Left colon (tissue), 2 donors: ENCODE measurements at regions of chr17 and their contacts with region 1.

Region 1: GRCh38 chr17:80866147-80866793 is 125.4 kb upstream of the CHMP6 start:
- DNase-seq: peak in 1 of 2 donors; percentile 79
- ATAC-seq: peak; percentile 87

Region 2: GRCh38 chr17:80970044-80970761 is 103.9 kb after region 1 on chr17:
- intact Hi-C with region 1: loop called in 1 of 2 experiments (anchors 10 kb)
- DNase-seq: peak in 1 of 2 donors; percentile 61
- ATAC-seq: peak; percentile 57